RWPE1 (cell line): ENCODE measurements at regions of chr1 and their contacts with region 1.

Region 1: DNA sequence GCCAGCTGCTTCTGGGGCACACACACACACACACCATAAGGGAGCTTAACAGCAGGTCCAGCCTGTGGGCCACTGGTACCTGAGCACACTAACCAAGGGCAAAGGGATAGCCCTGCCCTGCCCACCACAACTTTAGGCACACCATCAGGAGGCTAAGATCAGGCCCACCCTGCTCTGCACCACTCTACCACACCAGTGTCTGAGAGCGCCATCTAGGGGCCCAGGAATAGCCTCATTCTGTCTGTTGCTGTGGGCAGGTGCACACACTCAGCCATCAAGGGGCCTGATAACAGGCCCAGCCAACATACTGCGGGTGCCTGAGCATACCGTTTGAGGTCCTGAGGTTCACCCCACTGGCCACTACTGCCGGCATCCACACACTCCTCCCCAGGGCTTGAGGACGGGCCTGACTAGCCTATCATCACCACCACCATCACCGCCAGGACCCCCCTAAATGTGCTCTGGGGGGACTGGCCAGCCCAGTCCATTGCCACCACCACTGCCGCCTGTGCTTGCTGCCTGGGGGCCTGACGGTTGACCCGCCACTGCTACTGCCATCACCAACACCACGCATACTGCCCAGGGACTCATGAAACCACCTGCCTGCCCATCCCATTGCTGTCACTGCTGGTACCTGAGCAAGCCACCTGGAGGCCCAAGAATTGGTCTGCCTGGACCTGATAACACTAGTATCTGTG is 31.3 kb downstream of the NSL1 start:
- DNase-seq: no peak
- H3K27ac ChIP-seq: no peak overlapping the region
- CTCF ChIP-seq: no peak

Region 2: GRCh38 chr1:212771341-212771740 is 11.1 kb after region 1 on chr1:
- CTCF ChIA-PET with region 1: interaction called, 13 read pairs
- POLR2A ChIA-PET with region 1: no interaction called
- DNase-seq: no peak
- H3K27ac ChIP-seq: no peak overlapping the region
- CTCF ChIP-seq: no peak